Activated CD4-positive, alpha-beta memory T cell treated with anti-CD3 and anti-CD28 coated beads for 36 hours (primary cell): ENCODE measurements at regions of chr6 and their contacts with region 1.

Region 1: DNA sequence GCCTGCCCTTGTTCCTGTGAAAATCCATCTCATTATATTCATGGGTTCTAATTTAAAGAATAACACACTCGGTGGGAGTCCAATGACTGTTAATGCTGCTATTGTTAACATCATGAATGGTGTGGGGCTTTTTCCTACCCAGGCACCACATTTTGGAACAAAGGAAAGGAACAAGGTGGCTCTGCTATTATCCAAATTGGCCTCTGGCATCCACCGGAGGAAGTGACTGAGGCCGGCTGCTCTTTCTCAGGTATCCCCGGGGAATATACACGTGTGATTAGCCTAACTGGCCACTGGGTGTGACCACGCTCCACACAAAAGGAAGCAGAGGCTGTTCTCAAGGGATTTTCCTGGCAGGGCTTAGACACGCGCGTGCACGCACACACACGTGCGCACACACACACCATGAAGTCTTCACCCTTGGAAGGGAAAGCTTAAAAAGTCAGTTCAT is 601.2 kb upstream of the ARID1B start:
- DNase-seq: no peak
- H3K4me3 Mint-ChIP-seq: no peak overlapping the region
- H3K27ac Mint-ChIP-seq: peak overlapping the region; percentile 35
- H3K4me1 Mint-ChIP-seq: peaks cover 24% of the 10 kb centered on the region
- H3K27me3 Mint-ChIP-seq: no peaks in the 10 kb centered on the region

Region 2: GRCh38 chr6:155628306-155628705 is 547.7 kb before region 1 on chr6:
- CTCF ChIA-PET with region 1: no interaction called
- POLR2A ChIA-PET with region 1: interaction called, 3 read pairs
- intact Hi-C with region 1: loop called (anchors 1 kb)
- DNase-seq: peak; percentile 85
- H3K4me3 Mint-ChIP-seq: peak overlapping the region; percentile 8
- H3K27ac Mint-ChIP-seq: peak overlapping the region; percentile 95
- H3K4me1 Mint-ChIP-seq: peaks cover 18% of the 10 kb centered on the region
- H3K27me3 Mint-ChIP-seq: peaks cover 1% of the 10 kb centered on the region

Region 3: GRCh38 chr6:156191895-156192294 is 15.9 kb after region 1 on chr6:
- CTCF ChIA-PET with region 1: interaction called, 4 read pairs
- POLR2A ChIA-PET with region 1: no interaction called
- intact Hi-C with region 1: loop called (anchors 1 kb)
- DNase-seq: no peak
- H3K4me3 Mint-ChIP-seq: no peak overlapping the region
- H3K27ac Mint-ChIP-seq: no peak overlapping the region
- H3K4me1 Mint-ChIP-seq: peaks cover 17% of the 10 kb centered on the region
- H3K27me3 Mint-ChIP-seq: no peaks in the 10 kb centered on the region

Region 4: DNA sequence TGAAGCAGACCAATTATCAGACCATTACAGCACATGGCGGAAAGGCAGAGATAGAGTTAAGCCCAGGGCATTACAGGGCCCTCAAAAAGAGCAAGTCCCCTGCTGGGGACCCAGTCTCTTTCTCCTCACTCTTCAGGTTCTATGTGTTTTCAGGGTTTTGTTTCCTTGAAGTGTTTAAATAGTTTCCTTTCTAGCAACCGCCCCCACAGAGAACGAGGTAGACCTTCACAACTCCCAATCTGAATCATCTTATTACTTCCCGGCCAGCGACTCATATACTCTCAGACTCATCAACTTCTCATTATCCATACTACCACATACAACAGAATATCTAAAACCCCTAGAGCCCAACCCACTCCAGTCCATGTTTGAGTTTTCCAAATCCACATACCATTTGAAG is 74.6 kb after region 1 on chr6:
- CTCF ChIA-PET with region 1: no interaction called
- POLR2A ChIA-PET with region 1: no interaction called
- intact Hi-C with region 1: loop called (anchors 1 kb)
- DNase-seq: peak; percentile 63
- H3K4me3 Mint-ChIP-seq: no peak overlapping the region
- H3K27ac Mint-ChIP-seq: peak overlapping the region; percentile 71
- H3K4me1 Mint-ChIP-seq: peaks cover 18% of the 10 kb centered on the region
- H3K27me3 Mint-ChIP-seq: peaks cover 2% of the 10 kb centered on the region

Region 5: DNA sequence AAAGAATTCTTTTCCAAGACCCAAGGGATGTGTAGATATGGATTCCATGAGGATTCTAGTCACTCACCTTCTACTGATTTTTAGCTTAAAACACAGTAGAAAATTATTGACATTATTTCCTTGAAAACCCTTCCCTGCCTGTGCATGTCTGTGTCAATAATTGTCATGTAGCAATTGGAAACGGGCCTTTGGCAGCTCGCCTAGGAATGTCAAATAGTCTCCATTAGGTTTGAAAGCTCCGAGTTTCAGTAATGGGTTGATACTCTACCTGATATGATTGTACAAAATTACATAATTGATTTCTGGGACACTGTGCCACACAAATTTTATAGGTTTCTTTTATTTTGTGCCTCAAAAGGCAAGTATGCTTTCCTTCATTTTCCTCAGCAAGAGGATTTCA is 86.0 kb after region 1 on chr6:
- CTCF ChIA-PET with region 1: no interaction called
- POLR2A ChIA-PET with region 1: no interaction called
- intact Hi-C with region 1: no loop called
- DNase-seq: no peak
- H3K4me3 Mint-ChIP-seq: no peak overlapping the region
- H3K27ac Mint-ChIP-seq: no peak overlapping the region
- H3K4me1 Mint-ChIP-seq: no peaks in the 10 kb centered on the region
- H3K27me3 Mint-ChIP-seq: no peaks in the 10 kb centered on the region